Panc1 (cell line): ENCODE measurements at regions of chr2 and their contacts with region 1.

Region 1: DNA sequence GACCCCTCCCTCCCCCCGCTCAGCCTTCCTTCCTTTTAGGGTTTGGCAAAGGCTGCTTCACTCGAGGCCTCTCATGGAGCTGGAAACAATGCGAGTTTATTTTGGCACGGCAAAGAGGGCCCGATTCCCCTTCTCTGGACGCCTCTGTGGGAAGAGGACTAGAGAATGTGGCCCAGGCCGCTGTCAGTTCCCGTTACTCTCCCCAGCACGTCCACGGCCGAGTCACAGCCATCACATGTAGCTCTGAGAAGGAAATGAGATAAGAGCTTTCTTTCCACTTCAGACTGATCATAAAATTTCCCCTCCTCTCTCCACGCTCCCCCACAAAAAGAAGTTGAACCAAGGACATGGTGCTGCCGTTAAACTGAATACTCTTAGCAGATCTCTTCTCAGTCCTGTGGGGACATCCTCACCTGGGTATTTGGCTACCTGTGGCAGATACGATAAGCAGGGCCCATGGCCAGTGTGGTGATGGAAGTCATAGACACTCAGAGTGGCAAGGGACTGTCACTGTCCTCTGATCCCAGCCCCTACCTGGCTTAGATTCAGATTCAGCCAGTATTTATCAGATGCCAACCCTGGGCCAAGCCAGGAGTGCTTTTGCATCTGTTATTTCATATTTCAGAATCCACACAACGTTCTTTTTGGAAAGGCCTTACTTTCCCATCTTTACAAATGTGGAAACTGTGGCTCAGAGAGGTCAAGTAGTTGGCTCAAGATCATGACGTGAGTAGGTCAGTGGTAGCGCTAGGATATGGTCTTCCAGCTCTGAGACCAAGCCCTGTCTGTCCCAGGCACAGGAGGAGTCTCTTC is 101.3 kb downstream of the MCFD2 start:
- DNase-seq: no peak
- ATAC-seq: no peak
- H3K4me3 ChIP-seq: no peak overlapping the region
- H3K27ac ChIP-seq: no peak overlapping the region
- H3K4me1 ChIP-seq: no peaks in the 10 kb centered on the region
- H3K27me3 ChIP-seq: no peaks in the 10 kb centered on the region
- CTCF ChIP-seq: no peak

Region 2: GRCh38 chr2:46187112-46187618 is 627.2 kb before region 1 on chr2:
- CTCF ChIA-PET with region 1: no interaction called
- POLR2A ChIA-PET with region 1: interaction called, 19 read pairs
- in situ Hi-C with region 1: no loop called
- intact Hi-C with region 1: no loop called
- DNase-seq: no peak
- ATAC-seq: peak; percentile 42; the same call in 1 of the 2 replicates
- H3K4me3 ChIP-seq: no peak overlapping the region
- H3K27ac ChIP-seq: no peak overlapping the region
- H3K4me1 ChIP-seq: 0 out of 2 replicates have a peak, but pooled peaks cover 2% of the 10 kb centered on the region
- H3K27me3 ChIP-seq: no peaks in the 10 kb centered on the region
- CTCF ChIP-seq: no peak